Transverse colon (tissue), 4 donors: ENCODE measurements at regions of chr2 and their contacts with region 1.

Region 1: GRCh38 chr2:24527536-24527935 is 36.5 kb downstream of the NCOA1 start:
- DNase-seq: no peak
- H3K4me3 ChIP-seq: no peak overlapping the region
- H3K27ac ChIP-seq: no peak overlapping the region
- H3K4me1 ChIP-seq: peaks cover 0 to 23% (median 6%) of the 10 kb centered on the region in 4 donors
- H3K27me3 ChIP-seq: no peaks in the 10 kb centered on the region
- CTCF ChIP-seq: no peak
- EP300 ChIP-seq: no peak
- POLR2A ChIP-seq: no peak

Region 2: GRCh38 chr2:24360050-24360962 is 167.2 kb before region 1 on chr2 and contains the start of gene ITSN2:
- in situ Hi-C with region 1: no loop called
- intact Hi-C with region 1: no loop called
- DNase-seq: peak; percentile 87
- H3K4me3 ChIP-seq: peak within 1 kb of the TSS; percentile 72 to 100 (median 90)
- H3K27ac ChIP-seq: peak within 1 kb of the TSS; percentile 92 to 97 (median 96)
- H3K4me1 ChIP-seq: peaks cover 0 to 33% (median 21%) of the 10 kb centered on the region in 4 donors
- H3K27me3 ChIP-seq: no peaks in the 10 kb centered on the region
- CTCF ChIP-seq: no peak
- EP300 ChIP-seq: no peak
- POLR2A ChIP-seq: peak; percentile 74
- total RNA-seq, gene ITSN2: 32.8 to 58.0 (median 41.4) TPM

Region 3: GRCh38 chr2:24473626-24474025 is 53.9 kb before region 1 on chr2:
- in situ Hi-C with region 1: no loop called
- intact Hi-C with region 1: loop called (anchors 2 kb)
- DNase-seq: no peak
- H3K4me3 ChIP-seq: no peak overlapping the region
- H3K27ac ChIP-seq: no peak overlapping the region
- H3K4me1 ChIP-seq: no peaks in the 10 kb centered on the region
- H3K27me3 ChIP-seq: no peaks in the 10 kb centered on the region
- CTCF ChIP-seq: no peak
- EP300 ChIP-seq: no peak
- POLR2A ChIP-seq: no peak